Ascending aorta (tissue), 2 donors: ENCODE measurements at regions of chr1 and their contacts with region 1.

Region 1: DNA sequence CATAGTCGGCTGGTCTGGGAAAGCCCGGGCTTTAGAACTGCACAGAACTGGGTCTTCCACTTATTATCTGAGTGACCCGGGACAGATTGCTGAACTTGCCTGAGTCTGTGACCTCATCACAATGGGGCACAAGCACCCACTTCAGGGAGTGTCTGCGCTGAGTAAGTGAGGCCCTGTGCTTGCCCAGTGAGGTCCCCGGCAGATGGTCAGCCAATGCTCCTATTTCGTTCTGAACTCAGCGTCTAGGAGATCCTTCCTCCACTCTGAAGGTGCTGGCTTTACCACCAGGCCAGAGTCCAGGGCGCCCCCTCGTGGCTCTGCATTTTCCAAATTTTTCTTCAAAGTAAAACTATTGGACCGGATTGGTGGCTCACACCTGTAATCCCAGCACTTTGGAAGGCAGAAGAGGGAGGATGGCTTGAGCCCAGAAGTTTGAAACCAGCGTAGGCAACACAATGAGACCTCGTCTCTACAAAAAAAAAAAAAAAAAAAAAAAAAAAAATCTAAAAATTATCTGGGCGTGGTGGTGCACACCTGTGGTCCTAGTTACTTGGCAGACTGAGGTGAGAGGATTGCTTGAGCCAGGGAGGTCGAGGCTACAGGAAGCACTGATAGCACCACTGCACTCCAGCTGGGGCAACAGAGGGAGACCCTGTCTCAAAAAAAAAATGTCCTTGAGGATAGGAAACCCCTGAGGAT is 61.7 kb downstream of the FCRL5 start:
- DNase-seq: peak in 1 of 2 donors; percentile 72
- H3K4me3 ChIP-seq: no peak overlapping the region
- H3K27ac ChIP-seq: no peak overlapping the region
- H3K4me1 ChIP-seq: no peaks in the 10 kb centered on the region
- H3K27me3 ChIP-seq: no peaks in the 10 kb centered on the region
- CTCF ChIP-seq: peak in 2 of 3 experiments; percentile 7 to 45

Region 2: DNA sequence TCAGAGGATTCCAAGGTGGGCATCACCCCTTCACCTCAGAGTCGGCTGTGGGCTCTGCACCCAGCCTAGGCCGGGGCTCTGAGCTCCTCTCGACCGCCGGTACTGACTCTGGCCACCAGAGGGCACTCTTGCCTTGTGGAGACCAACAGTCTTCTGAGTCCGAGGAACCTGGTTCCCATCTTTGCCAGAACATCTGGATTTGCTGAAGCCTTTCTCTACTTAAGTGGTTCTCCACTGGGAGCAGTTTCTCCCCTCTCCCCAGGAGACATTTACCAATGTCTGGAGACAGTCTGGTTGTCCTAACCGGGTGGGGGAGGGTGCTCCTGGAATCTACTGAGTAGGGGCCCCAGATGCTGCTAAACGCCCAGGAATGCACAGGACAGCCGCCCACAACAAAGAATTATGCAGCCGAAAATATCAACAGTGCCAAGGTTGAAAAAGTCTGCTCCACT is 400.4 kb before region 1 on chr1:
- intact Hi-C with region 1: loop called (anchors 5 kb)
- DNase-seq: peak in 1 of 2 donors; percentile 87
- H3K4me3 ChIP-seq: no peak overlapping the region
- H3K27ac ChIP-seq: no peak overlapping the region
- H3K4me1 ChIP-seq: peaks cover 0 to 3% of the 10 kb centered on the region in 2 donors
- H3K27me3 ChIP-seq: no peaks in the 10 kb centered on the region
- CTCF ChIP-seq: peak; percentile 86 to 98 (median 95)

Region 3: GRCh38 chr1:157166590-157166989 is 324.0 kb before region 1 on chr1:
- intact Hi-C with region 1: loop called (anchors 5 kb)
- DNase-seq: no peak
- H3K4me3 ChIP-seq: no peak overlapping the region
- H3K27ac ChIP-seq: no peak overlapping the region
- H3K4me1 ChIP-seq: no peaks in the 10 kb centered on the region
- H3K27me3 ChIP-seq: no peaks in the 10 kb centered on the region
- CTCF ChIP-seq: no peak

Region 4: GRCh38 chr1:157193702-157194391 is 296.8 kb before region 1 on chr1:
- intact Hi-C with region 1: loop called (anchors 10 kb)
- DNase-seq: no peak
- H3K4me3 ChIP-seq: no peak overlapping the region
- H3K27ac ChIP-seq: no peak overlapping the region
- H3K4me1 ChIP-seq: no peaks in the 10 kb centered on the region
- H3K27me3 ChIP-seq: no peaks in the 10 kb centered on the region
- CTCF ChIP-seq: peak in 2 of 3 experiments; percentile 21 to 41